ENCODE measurements at regions of chr17 and their contacts with region 1.

Region 1: DNA sequence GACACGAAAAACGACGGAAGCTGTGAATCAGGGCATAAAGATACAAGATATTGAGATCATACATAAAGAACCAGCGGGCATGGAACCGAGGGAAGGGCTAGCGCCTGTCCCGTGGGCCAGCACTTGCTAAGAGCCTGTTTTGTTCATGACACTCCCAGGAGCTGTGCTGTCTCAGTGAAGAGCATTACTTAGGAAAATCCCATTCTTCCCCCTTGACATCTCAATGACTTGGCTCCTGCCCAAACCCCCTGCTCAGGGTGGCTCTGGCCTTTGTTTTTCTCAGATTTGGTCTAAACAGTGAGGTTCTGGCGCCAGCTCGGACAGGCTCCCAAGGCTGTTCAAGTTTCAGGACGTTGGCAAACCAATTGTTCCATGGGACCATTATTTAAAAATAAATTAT is 79.1 kb upstream of the SEC14L1 start:
- DNase-seq: no peak
- H3K4me3 ChIP-seq: no peak overlapping the region
- H3K27ac ChIP-seq: no peak overlapping the region
- H3K4me1 ChIP-seq: no peaks in the 10 kb centered on the region
- H3K27me3 ChIP-seq: no peaks in the 10 kb centered on the region
- CTCF ChIP-seq: no peak

Region 2: DNA sequence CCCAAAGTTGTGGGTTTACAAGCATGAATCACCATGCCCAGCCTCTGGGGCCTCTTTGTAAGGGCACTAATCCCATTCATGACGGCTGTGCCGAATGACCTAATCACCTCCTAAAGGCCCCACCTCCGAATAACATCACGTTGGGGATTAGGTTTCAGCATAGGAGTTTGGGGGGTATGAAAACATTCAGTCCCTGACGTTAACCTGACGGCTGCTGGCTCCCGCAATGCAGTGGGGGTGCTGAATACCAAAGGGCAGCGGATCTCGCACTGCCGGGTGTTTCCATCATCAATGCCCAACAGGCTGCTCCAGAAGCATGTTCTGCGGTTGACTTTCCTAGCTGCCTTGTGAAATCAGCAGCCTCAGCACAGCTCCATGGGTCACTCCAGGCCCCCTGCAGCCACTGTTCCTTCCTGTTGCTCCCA is 41.7 kb before region 1 on chr17:
- CTCF ChIA-PET with region 1: interaction called, 12 read pairs
- POLR2A ChIA-PET with region 1: no interaction called
- intact Hi-C with region 1: no loop called
- DNase-seq: no peak
- H3K4me3 ChIP-seq: no peak overlapping the region
- H3K27ac ChIP-seq: no peak overlapping the region
- H3K4me1 ChIP-seq: no peaks in the 10 kb centered on the region
- H3K27me3 ChIP-seq: no peaks in the 10 kb centered on the region; the same call in 1 of the 2 replicates
- CTCF ChIP-seq: no peak

Measured in PC-9 (cell line).